ENCODE measurements at regions of chr3 and their contacts with region 1.

Region 1: GRCh38 chr3:141828487-141829268 is 47.8 kb upstream of the ATP1B3 start:
- DNase-seq: peak; percentile 48 to 65
- H3K4me3 ChIP-seq: no peak overlapping the region
- H3K27ac ChIP-seq: no peak overlapping the region
- H3K4me1 ChIP-seq: peaks cover 17% of the 10 kb centered on the region
- H3K27me3 ChIP-seq: no peaks in the 10 kb centered on the region
- CTCF ChIP-seq: no peak

Region 2: DNA sequence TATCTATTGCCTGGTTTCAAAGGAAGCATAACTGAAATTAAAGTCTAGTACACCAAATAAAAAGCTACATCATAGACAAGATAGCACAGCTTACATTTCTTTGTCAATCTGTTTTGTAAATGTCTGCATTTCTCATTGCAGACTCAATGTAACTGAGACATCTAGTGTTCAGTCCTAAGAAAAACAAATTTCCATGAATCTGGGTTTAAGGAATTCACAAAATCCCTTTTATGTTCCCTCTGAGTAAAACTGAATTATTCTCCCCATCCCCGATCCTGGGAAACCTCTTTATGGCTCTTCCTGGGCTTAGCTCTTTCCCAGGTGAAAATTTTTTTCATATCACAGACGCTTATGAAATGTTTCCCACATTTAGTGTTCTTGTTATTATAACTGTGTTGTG is 363.5 kb before region 1 on chr3:
- CTCF ChIA-PET with region 1: no interaction called
- POLR2A ChIA-PET with region 1: no interaction called
- intact Hi-C with region 1: no loop called
- DNase-seq: no peak
- H3K4me3 ChIP-seq: no peak overlapping the region
- H3K27ac ChIP-seq: no peak overlapping the region
- H3K4me1 ChIP-seq: no peaks in the 10 kb centered on the region
- H3K27me3 ChIP-seq: no peaks in the 10 kb centered on the region
- CTCF ChIP-seq: no peak; the same call in 1 of the 2 replicates

Region 3: DNA sequence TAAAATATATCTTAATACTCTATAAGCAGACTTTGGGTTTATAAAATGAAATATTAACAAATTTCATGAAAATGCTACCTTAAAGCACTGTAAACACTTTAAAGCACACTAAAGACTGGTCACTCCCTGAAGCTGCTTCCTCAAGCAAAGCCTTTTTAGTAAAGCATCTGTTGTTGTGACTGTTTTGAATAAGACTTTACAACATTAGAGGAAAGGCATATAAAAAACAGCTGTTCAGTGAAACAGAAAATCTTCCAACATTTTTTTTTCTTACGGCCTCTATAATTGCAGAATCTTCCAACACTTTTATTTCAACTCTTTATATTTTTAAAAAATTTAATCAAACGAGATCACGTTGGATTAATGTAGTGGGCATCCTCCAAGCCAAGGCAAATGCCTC is 17.3 kb before region 1 on chr3:
- CTCF ChIA-PET with region 1: no interaction called
- POLR2A ChIA-PET with region 1: interaction called, 17 read pairs
- intact Hi-C with region 1: no loop called
- DNase-seq: no peak
- H3K4me3 ChIP-seq: no peak overlapping the region
- H3K27ac ChIP-seq: no peak overlapping the region
- H3K4me1 ChIP-seq: no peaks in the 10 kb centered on the region
- H3K27me3 ChIP-seq: no peaks in the 10 kb centered on the region
- CTCF ChIP-seq: no peak

Measured in PC-9 (cell line).